Body of pancreas (tissue), 4 donors: ENCODE measurements at regions of chr4 and their contacts with region 1.

Region 1: DNA sequence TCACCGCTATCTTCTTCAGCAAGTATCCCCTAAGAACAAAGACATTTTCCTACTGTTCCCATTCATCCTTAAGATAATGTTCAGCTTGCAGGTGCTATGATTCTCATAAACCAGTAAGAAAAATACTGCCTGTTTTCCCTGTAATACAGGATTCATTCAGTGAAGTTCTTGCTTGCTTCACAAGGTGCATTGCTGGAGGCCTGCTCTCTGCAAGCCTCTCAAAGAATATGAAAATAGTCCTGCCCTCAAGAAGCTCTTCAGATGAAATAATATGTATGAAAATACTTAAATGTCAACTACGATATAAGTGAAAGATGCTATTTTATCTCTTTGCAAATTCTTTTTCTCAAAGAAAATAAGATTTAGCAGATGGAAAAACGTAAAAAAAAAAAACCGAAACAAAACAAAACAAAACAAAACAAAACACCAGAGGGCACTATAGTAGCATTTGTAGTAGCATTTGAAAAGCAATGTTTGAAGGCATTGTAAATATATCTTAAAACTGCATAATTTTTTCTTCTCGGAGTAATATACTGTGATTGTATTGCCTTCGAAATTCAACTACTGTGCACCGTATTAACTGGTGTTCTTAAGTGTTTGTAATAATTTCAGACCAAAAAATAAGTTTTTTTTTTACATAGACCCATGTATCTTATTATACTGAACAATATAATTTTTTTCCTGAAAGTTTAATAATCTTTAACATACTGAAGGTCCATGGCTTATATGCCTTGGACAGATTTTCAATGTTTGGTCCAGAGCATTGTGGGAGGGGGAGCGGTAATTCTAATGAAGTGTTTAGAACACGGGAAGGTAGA is 26.0 kb downstream of the ADH4 start:
- DNase-seq: no peak
- ATAC-seq: no peak
- H3K4me3 ChIP-seq: no peak overlapping the region
- H3K27ac ChIP-seq: no peak overlapping the region
- H3K4me1 ChIP-seq: no peaks in the 10 kb centered on the region
- H3K27me3 ChIP-seq: no peaks in the 10 kb centered on the region
- CTCF ChIP-seq: peak in 5 of 7 experiments; percentile 32 to 65 (median 37)
- POLR2A ChIP-seq: no peak

Region 2: DNA sequence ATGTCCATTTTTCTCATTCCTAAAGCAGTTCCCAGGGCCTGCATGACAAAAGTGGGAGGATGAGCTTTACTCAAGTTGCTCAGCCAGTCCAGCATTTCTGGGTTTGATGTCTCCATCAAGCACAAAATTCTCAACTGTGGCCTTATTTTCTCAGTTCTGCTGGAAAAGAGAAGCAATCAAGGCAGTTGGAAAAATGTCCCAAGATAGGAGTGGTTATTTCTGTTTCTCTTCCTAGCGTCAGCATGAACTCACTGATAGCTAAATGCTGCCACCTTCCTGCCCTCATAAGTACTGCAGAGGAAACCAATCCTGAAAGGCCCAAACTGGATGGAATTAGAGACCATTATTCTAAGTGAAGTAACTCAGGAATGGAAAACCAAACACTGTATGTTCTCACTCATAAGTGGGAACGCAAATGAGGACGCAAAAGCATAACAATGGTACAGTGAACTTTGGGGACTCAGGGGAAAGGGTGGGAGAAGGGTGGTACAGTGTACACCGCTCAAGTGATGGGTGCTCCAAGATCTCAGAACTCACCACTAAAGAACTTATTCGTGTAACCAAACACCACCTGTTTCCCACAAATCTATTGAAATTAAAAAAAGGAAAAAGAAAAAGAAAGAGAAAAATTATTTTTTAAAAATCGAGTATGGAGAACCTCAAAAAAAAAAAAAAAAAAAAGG is 287.5 kb after region 1 on chr4:
- intact Hi-C with region 1: loop called (anchors 10 kb)
- DNase-seq: peak; percentile 82 to 86 (median 84)
- ATAC-seq: peak; percentile 72
- H3K4me3 ChIP-seq: no peak overlapping the region
- H3K27ac ChIP-seq: peak overlapping the region in 2 of 4 donors; percentile 7 to 39
- H3K4me1 ChIP-seq: peaks cover 46% of the 10 kb centered on the region
- H3K27me3 ChIP-seq: no peaks in the 10 kb centered on the region
- CTCF ChIP-seq: peak; percentile 84 to 99 (median 98)
- POLR2A ChIP-seq: no peak

Region 3: DNA sequence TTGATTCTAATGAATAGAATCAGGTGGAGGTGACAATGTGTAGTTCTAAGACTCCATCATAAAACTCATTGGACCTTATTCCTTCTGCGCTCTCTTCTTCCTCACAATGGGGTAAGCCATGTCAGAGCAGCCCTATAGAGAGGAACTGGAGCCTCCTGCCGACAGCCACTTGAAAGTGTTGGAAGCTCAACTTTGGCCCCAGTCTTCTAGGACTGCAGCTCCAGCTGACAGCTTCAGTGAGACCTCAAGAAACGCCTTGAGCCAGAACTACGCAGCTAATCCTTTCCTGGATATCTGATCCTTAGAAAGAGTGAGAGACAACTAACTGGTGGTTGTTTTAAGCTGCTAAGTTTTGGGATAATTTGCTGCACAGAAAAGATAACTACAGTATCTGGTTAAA is 339.2 kb after region 1 on chr4:
- intact Hi-C with region 1: loop called (anchors 5 kb)
- DNase-seq: no peak
- ATAC-seq: no peak
- H3K4me3 ChIP-seq: no peak overlapping the region
- H3K27ac ChIP-seq: no peak overlapping the region
- H3K4me1 ChIP-seq: no peaks in the 10 kb centered on the region
- H3K27me3 ChIP-seq: no peaks in the 10 kb centered on the region
- CTCF ChIP-seq: no peak
- POLR2A ChIP-seq: no peak